ENCODE measurements at regions of chr11 and their contacts with region 1.

Region 1: DNA sequence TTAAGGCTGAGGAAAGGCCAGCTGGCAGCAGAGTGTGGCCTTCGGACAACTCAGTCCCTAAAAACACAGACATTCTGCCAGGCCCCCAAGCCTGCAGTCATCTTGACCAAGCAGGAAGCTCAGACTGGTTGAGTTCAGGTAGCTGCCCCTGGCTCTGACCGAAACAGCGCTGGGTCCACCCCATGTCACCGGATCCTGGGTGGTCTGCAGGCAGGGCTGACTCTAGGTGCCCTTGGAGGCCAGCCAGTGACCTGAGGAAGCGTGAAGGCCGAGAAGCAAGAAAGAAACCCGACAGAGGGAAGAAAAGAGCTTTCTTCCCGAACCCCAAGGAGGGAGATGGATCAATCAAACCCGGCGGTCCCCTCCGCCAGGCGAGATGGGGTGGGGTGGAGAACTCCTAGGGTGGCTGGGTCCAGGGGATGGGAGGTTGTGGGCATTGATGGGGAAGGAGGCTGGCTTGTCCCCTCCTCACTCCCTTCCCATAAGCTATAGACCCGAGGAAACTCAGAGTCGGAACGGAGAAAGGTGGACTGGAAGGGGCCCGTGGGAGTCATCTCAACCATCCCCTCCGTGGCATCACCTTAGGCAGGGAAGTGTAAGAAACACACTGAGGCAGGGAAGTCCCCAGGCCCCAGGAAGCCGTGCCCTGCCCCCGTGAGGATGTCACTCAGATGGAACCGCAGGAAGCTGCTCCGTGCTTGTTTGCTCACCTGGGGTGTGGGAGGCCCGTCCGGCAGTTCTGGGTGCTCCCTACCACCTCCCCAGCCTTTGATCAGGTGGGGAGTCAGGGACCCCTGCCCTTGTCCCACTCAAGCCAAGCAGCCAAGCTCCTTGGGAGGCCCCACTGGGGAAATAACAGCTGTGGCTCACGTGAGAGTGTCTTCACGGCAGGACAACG is 11.7 kb downstream of the CXCR5 start:
- DNase-seq: no peak
- ATAC-seq: peak; percentile 11; the same call in 1 of the 2 replicates
- H3K4me3 ChIP-seq: no peak overlapping the region
- H3K27ac ChIP-seq: peak overlapping the region; percentile 78
- H3K4me1 ChIP-seq: peaks cover 54% of the 10 kb centered on the region
- H3K27me3 ChIP-seq: no peaks in the 10 kb centered on the region
- CTCF ChIP-seq: no peak

Region 2: GRCh38 chr11:118878163-118878563 is 17.2 kb before region 1 on chr11:
- CTCF ChIA-PET with region 1: interaction called, 3 read pairs
- POLR2A ChIA-PET with region 1: interaction called, 15 read pairs
- in situ Hi-C with region 1: no loop called
- intact Hi-C with region 1: no loop called
- DNase-seq: no peak
- ATAC-seq: no peak
- H3K4me3 ChIP-seq: no peak overlapping the region
- H3K27ac ChIP-seq: no peak overlapping the region
- H3K4me1 ChIP-seq: no peaks in the 10 kb centered on the region
- H3K27me3 ChIP-seq: no peaks in the 10 kb centered on the region
- CTCF ChIP-seq: no peak